ENCODE measurements at regions of chr5 and their contacts with region 1.

Region 1: GRCh38 chr5:142145106-142145900 is 36.7 kb downstream of the NDFIP1 start:
- DNase-seq: no peak

Region 2: GRCh38 chr5:141992349-141992963 is 152.8 kb before region 1 on chr5:
- intact Hi-C with region 1: loop called in 1 of 2 experiments (anchors 10 kb)
- DNase-seq: no peak

Region 3: DNA sequence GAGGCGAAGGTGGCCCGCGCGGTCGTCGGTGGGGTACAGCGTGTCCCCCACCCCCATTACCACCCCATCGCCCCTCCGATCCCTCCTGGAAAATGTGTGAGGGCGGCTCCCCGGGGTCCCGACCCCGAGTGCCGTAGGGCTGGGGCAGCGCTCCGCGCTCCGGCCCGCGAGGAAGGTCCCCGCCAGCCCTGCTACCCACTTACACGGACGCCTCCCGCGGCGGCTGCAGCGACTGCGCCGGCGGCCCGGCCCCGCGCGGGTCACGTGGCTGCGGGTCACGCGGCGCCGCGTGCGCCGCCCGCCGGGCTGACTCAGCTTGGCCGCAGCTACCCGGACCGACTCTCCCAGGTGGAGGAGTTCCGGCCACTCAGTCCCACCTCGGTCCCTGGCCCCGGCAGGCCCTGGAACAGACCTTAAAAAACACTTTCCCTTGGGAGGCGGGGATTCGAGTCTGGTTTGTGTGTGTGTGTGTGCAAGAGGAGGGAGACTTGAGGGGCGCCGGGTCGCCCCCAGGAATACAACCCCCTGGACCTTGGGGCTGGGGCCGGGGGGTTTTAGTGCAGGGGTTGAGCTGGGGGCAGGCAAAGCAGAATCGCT is 132.4 kb before region 1 on chr5 and contains the start of gene GNPDA1:
- intact Hi-C with region 1: loop called in 1 of 2 experiments (anchors 5 kb)
- DNase-seq: peak; percentile 95
- total RNA-seq, gene GNPDA1: 21.8 to 35.5 TPM

Region 4: GRCh38 chr5:142069606-142070399 is 75.5 kb before region 1 on chr5:
- intact Hi-C with region 1: loop called in 1 of 2 experiments (anchors 2 kb)
- DNase-seq: no peak

Region 5: GRCh38 chr5:143501304-143502044 is 1356.2 kb after region 1 on chr5:
- intact Hi-C with region 1: no loop called
- DNase-seq: no peak

Measured in posterior vena cava (tissue), 2 donors.